Naive thymus-derived CD4-positive, alpha-beta T cell (primary cell): ENCODE measurements at regions of chr16 and their contacts with region 1.

Region 1: DNA sequence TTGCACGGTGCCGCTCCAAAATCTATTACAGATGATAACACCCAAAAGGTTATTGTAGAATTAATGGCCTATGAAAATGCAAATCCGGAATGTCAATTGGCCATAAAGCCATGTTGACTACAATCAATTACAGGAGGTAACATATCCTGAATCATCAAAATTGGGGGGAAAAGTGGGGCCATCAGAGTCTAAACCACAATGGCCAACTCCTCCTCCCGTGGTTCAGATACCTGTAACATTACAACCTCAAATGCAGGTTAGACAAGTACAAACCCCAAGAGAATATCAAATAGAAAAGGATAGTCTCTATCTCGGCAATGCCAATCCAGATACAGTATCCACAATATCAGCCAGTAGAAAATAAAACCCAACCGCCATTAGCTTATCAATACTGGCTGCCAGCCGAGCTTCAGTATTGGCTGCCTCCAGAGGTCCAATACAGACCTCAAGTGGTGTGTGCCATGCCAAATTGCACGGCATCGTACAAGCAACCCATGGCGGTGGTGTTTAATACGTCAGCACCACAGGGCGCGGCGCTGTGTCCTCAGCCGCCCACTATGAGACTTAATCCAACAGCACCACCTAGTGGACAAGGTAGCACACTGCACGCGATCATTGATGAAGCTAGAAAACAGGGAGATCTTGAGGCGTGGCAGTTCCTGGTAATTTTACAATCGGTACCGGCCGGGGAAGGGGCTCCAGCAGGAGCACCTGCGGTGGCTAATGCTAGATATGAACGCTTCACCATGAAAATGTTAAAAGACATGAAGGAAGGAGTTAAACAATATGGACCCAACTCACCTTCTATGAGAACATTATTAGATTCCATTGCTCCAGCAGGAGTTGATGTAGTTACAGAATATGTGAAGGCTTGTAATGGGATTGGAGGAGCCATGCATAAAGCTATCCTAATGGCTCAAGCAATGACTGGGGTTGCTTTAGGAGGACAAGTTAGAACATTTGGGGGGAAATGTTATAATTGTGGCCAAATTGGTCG is 15.2 kb downstream of the FLYWCH1 start:
- DNase-seq: peak; percentile 64 to 91 (median 84)
- ATAC-seq: peak; percentile 100
- H3K4me3 ChIP-seq: no peak overlapping the region
- H3K4me3 Mint-ChIP-seq: peak overlapping the region in 7 of 10 donors; percentile 0 to 48 (median 29)
- H3K27ac ChIP-seq: no peak overlapping the region
- H3K27ac Mint-ChIP-seq: peak overlapping the region in 7 of 9 donors; percentile 0 to 63 (median 48)
- H3K4me1 ChIP-seq: peaks cover 5 to 10% of the 10 kb centered on the region in 2 donors
- H3K4me1 Mint-ChIP-seq: peaks cover 9 to 19% (median 16%) of the 10 kb centered on the region in 7 donors
- H3K27me3 ChIP-seq: no peaks in the 10 kb centered on the region
- H3K27me3 Mint-ChIP-seq: no peaks in the 10 kb centered on the region

Region 2: GRCh38 chr16:2838928-2839327 is 88.0 kb before region 1 on chr16:
- CTCF ChIA-PET with region 1: interaction called, 7 read pairs
- POLR2A ChIA-PET with region 1: no interaction called
- intact Hi-C with region 1: loop called in 1 of 2 experiments (anchors 2 kb)
- DNase-seq: peak; percentile 33 to 57 (median 48)
- ATAC-seq: peak; percentile 79
- H3K4me3 ChIP-seq: no peak overlapping the region
- H3K4me3 Mint-ChIP-seq: peak overlapping the region in 1 of 10 donors; percentile 14
- H3K27ac ChIP-seq: no peak overlapping the region
- H3K27ac Mint-ChIP-seq: peak overlapping the region in 7 of 9 donors; percentile 18 to 66 (median 47)
- H3K4me1 ChIP-seq: peaks cover 30 to 33% of the 10 kb centered on the region in 2 donors
- H3K4me1 Mint-ChIP-seq: peaks cover 13 to 45% (median 24%) of the 10 kb centered on the region in 7 donors
- H3K27me3 ChIP-seq: no peaks in the 10 kb centered on the region
- H3K27me3 Mint-ChIP-seq: peaks cover 0 to 6% (median 0%) of the 10 kb centered on the region in 5 donors

Region 3: DNA sequence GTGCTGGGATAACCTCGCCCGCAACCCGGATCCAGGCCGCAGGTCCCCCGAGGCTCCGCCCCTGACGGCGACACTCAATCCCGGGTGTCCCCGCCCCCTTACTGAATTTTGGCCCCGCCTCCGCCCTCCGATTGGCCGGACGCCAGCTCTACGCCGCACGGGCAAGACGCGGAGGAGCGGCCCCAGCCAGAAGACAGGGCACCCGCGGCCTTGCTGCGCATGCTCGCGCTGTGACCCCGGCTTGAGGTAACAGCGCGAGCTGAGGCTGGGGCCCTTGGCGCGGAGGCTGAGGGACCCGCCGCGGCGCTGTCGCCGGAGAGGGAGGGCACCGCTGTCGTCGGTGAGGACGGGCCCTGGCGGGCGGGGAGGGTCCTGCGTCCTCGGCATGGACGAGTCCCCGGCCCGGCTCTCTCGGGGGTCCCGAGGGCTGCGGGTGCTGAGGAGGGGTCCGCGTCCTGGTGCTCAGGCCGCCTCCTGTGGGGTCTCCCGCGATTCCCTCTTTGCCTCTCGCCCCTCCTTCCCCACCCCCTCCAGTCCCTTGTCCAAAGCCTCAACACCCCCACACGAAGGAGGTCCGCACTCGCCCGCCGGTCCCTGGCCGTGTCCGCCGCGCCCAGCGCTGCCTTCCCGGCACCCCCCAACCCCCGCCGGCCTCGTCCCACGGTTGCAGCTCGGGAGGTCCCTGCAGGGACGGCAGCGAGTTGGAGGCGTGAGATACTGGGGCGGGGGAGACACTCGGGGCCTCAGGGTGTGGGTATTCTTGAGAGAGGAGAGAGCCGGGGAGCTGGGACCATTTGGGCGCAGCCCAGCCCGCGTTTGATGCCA is 43.7 kb before region 1 on chr16 and contains the start of gene FLYWCH2:
- CTCF ChIA-PET with region 1: interaction called, 7 read pairs
- POLR2A ChIA-PET with region 1: interaction called, 5 read pairs
- intact Hi-C with region 1: loop called in 1 of 2 experiments (anchors 2 kb)
- DNase-seq: peak; percentile 98 to 100 (median 100)
- ATAC-seq: peak; percentile 89
- H3K4me3 ChIP-seq: peak within 1 kb of the TSS; percentile 69
- H3K4me3 Mint-ChIP-seq: peak within 1 kb of the TSS; percentile 90 to 97 (median 94)
- H3K27ac ChIP-seq: peak within 1 kb of the TSS; percentile 84
- H3K27ac Mint-ChIP-seq: peak within 1 kb of the TSS; percentile 93 to 99 (median 97)
- H3K4me1 ChIP-seq: peaks cover 6% of the 10 kb centered on the region in 2 donors
- H3K4me1 Mint-ChIP-seq: peaks cover 0 to 18% (median 13%) of the 10 kb centered on the region in 7 donors
- H3K27me3 ChIP-seq: no peaks in the 10 kb centered on the region
- H3K27me3 Mint-ChIP-seq: no peaks in the 10 kb centered on the region
- total RNA-seq, gene FLYWCH2: 13.6 to 30.4 (median 24.0) TPM